GM18951 (cell line): ENCODE measurements at regions of chr17 and their contacts with region 1.

Region 1: GRCh38 chr17:66727639-66728570 is 107.0 kb upstream of the CACNG5 start:
- POLR2A ChIP-seq: no peak

Region 2: GRCh38 chr17:66331038-66331816 is 396.7 kb before region 1 on chr17:
- in situ Hi-C with region 1: no loop called
- POLR2A ChIP-seq: no peak

Region 3: GRCh38 chr17:66507103-66507853 is 220.6 kb before region 1 on chr17:
- in situ Hi-C with region 1: no loop called
- POLR2A ChIP-seq: no peak

Region 4: DNA sequence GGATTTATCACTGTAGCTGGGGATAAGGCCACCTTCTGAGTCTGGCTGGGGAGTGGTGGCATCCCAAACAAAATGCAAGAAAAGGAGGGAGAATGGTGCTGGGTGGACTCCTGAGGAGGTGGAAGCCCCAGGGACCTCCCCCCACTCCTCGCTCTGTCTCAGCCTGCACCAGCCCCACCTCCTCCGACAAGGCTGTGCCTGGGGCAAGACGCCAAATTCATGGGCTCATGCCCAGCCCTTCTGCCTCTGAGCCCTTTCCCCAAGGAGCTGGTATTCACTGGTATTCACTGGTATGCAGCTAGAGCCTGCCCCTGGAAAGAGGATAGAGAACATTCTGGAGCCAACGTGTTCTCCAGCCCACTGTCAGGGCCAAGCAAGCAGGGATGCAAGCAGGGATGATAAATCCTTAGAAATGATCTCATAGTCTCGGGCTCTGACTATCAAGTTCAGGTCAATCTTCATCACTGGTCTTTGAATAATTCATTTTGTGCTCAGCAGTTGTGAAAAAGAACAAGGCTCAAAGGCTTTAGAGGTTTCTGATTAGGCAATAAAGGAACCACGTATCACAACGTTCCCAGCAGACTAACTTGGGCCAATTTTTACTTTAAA is 164.2 kb after region 1 on chr17:
- in situ Hi-C with region 1: loop called (anchors 10 kb)
- POLR2A ChIP-seq: no peak